ENCODE measurements at regions of chr2 and their contacts with region 1.

Region 1: DNA sequence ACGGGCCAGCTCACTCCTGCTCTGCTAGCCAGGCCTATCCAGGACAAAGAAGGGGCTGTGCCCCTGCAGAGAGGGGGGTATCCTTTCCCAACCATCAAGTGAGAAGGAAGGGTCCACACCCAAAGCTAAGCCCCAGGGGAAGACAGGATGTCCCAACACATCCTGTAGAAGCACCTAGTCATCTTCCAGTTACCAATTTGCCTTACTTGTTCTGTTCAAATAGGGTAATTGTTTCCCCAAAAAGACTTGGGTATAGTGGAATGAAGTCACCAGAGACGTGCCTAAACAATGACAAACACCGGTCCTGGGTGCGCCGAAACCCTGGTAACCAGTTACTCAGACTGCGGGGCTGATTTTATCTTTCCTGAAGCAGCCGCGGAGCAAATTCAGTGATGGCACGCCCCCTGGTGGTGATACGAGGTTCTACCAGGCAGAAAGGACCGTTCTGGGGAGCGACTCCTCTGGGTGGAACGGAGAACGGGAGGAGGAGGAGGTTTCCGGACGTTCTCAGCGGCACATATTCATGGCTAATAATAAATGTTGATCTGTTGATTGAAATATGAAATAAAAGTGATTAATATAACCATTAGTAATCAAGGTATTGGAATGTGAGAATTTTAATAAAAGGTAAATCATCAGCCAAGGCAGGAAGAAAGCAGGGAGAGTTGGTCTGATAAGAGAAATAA is 109.3 kb upstream of the STON1 start:
- DNase-seq: peak; percentile 80
- ATAC-seq: peak; percentile 71
- H3K4me3 ChIP-seq: peak overlapping the region in 1 of 3 experiments; percentile 51; a peak in 2 of 6 replicates
- H3K27ac ChIP-seq: no peak overlapping the region
- H3K4me1 ChIP-seq: peaks cover 57% of the 10 kb centered on the region
- H3K27me3 ChIP-seq: peaks cover 0 to 11% of the 10 kb centered on the region in 2 experiments; a peak in 1 of 5 replicates
- CTCF ChIP-seq: peak; percentile 98
- EP300 ChIP-seq: no peak
- POLR2A ChIP-seq: no peak
- RAD21 ChIP-seq: peak; percentile 99

Region 2: GRCh38 chr2:47850198-47850597 is 570.5 kb before region 1 on chr2:
- CTCF ChIA-PET with region 1: no interaction called
- POLR2A ChIA-PET with region 1: no interaction called
- in situ Hi-C with region 1: loop called (anchors 10 kb)
- intact Hi-C with region 1: loop called (anchors 5 kb)
- DNase-seq: no peak
- ATAC-seq: no peak
- H3K4me3 ChIP-seq: no peak overlapping the region
- H3K27ac ChIP-seq: no peak overlapping the region
- H3K4me1 ChIP-seq: peaks cover 10% of the 10 kb centered on the region
- H3K27me3 ChIP-seq: no peaks in the 10 kb centered on the region
- CTCF ChIP-seq: no peak
- EP300 ChIP-seq: no peak
- POLR2A ChIP-seq: no peak
- RAD21 ChIP-seq: no peak

Region 3: GRCh38 chr2:47862949-47863348 is 557.7 kb before region 1 on chr2:
- CTCF ChIA-PET with region 1: no interaction called
- POLR2A ChIA-PET with region 1: no interaction called
- in situ Hi-C with region 1: loop called (anchors 10 kb)
- intact Hi-C with region 1: loop called (anchors 5 kb)
- DNase-seq: no peak
- ATAC-seq: no peak
- H3K4me3 ChIP-seq: no peak overlapping the region
- H3K27ac ChIP-seq: no peak overlapping the region
- H3K4me1 ChIP-seq: peaks cover 15% of the 10 kb centered on the region; the same call in 1 of the 2 replicates
- H3K27me3 ChIP-seq: no peaks in the 10 kb centered on the region
- CTCF ChIP-seq: no peak
- EP300 ChIP-seq: no peak
- POLR2A ChIP-seq: no peak
- RAD21 ChIP-seq: no peak

Region 4: GRCh38 chr2:48205137-48205798 is 215.4 kb before region 1 on chr2:
- CTCF ChIA-PET with region 1: no interaction called
- POLR2A ChIA-PET with region 1: no interaction called
- in situ Hi-C with region 1: loop called (anchors 25 kb)
- intact Hi-C with region 1: loop called (anchors 2 kb)
- DNase-seq: peak; percentile 97
- ATAC-seq: peak; percentile 97
- H3K4me3 ChIP-seq: peak overlapping the region; percentile 26 to 55 (median 34)
- H3K27ac ChIP-seq: peak overlapping the region; percentile 71
- H3K4me1 ChIP-seq: peaks cover 74% of the 10 kb centered on the region
- H3K27me3 ChIP-seq: no peaks in the 10 kb centered on the region
- CTCF ChIP-seq: peak; percentile 57
- EP300 ChIP-seq: peak in 1 of 2 experiments; percentile 66; a peak in 2 of 4 replicates
- POLR2A ChIP-seq: peak in 1 of 2 experiments; percentile 46; a peak in 1 of 4 replicates
- RAD21 ChIP-seq: peak; percentile 68; the same call in 1 of the 2 replicates

Region 5: GRCh38 chr2:48343571-48344440 is 76.8 kb before region 1 on chr2:
- CTCF ChIA-PET with region 1: no interaction called
- POLR2A ChIA-PET with region 1: no interaction called
- in situ Hi-C with region 1: no loop called
- intact Hi-C with region 1: loop called (anchors 1 kb)
- DNase-seq: peak; percentile 87
- ATAC-seq: peak; percentile 73
- H3K4me3 ChIP-seq: peak overlapping the region; percentile 24 to 57 (median 53); a peak in 5 of 6 replicates
- H3K27ac ChIP-seq: peak overlapping the region; percentile 77
- H3K4me1 ChIP-seq: peaks cover 56% of the 10 kb centered on the region
- H3K27me3 ChIP-seq: no peaks in the 10 kb centered on the region
- CTCF ChIP-seq: no peak
- EP300 ChIP-seq: peak in 1 of 2 experiments; percentile 72; a peak in 2 of 4 replicates
- POLR2A ChIP-seq: no peak
- RAD21 ChIP-seq: no peak

Region 6: DNA sequence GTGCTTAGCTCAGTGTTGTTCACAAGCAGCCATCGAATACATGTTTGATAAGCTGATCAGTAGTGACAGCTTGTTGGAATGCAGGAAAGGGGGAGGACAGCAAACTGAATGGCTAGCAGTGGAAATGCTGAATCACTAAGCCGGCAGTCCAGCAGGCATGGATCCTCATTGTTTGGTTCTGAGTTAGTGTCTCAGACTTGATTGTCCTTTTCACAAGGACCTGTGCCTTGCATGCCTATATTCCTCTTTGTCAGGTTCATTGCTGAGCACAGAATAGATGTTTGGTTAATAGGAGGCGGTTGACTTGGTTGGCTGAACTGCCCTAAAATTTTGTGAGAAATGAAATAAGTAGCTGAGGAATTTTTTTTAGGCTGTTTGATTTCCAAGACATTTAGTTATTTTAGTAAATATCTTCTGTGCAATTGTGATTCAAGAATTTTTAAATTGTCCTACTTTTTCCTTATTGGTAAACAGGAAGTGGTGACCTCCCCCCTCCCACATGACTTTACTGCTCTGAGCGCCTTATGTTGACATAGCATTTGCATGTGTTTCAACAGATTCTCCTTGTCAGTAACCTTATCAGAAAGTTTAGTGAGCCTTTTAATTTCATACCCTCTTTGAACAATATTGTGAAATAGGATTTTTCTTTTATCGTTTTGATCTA is 87.9 kb after region 1 on chr2:
- CTCF ChIA-PET with region 1: no interaction called
- POLR2A ChIA-PET with region 1: no interaction called
- in situ Hi-C with region 1: no loop called
- intact Hi-C with region 1: no loop called
- DNase-seq: peak; percentile 75
- ATAC-seq: peak; percentile 90
- H3K4me3 ChIP-seq: no peak overlapping the region
- H3K27ac ChIP-seq: peak overlapping the region; percentile 72
- H3K4me1 ChIP-seq: peaks cover 17% of the 10 kb centered on the region
- H3K27me3 ChIP-seq: no peaks in the 10 kb centered on the region
- CTCF ChIP-seq: no peak
- EP300 ChIP-seq: peak in 1 of 2 experiments; percentile 62; a peak in 1 of 4 replicates
- POLR2A ChIP-seq: no peak
- RAD21 ChIP-seq: no peak